Colonic mucosa (tissue), 4 donors: ENCODE measurements at regions of chrX and their contacts with region 1.

Region 1: DNA sequence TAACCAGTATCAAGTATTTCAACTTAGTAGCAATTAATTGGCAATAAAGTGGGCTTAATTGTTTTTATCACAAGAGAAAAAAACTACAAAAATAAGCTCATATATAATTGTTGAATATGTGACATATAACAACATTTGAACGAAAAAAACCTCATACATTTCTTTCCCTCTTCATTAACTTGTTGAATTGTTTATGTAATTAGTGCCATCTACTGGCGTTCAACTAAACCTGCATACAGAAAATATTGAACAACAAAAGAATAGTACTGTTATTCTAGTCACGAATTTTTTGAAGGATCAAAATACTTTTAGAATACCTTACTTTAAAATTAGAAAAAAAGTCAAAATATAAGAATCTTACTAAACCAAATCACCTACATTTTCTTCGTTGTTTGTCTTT is 586.5 kb upstream of the FTHL17 start:
- DNase-seq: no peak
- H3K4me3 ChIP-seq: no peak overlapping the region
- H3K27ac ChIP-seq: no peak overlapping the region
- H3K4me1 ChIP-seq: no peaks in the 10 kb centered on the region
- H3K27me3 ChIP-seq: no peaks in the 10 kb centered on the region
- CTCF ChIP-seq: peak; percentile 60

Region 2: DNA sequence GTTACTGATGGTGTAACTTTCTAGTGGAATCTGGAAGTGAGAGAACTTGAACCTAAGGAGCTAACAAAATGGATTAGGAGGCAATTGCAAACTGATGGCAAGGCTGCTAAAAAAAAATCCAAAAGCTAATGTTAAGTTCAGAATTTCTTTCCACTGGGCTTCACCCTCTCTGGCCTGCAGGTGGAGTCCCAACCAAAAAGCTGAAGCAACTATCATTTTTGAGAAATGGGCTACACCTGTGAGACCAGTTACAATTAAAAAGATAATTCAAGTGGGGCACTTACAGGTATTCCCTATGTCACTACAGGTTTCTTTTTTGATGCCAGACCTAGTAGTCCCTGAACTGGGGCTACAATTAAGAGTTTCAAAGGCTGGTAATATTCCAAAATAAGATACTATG is 444.4 kb before region 1 on chrX:
- intact Hi-C with region 1: loop called (anchors 5 kb)
- DNase-seq: no peak
- H3K4me3 ChIP-seq: no peak overlapping the region
- H3K27ac ChIP-seq: no peak overlapping the region
- H3K4me1 ChIP-seq: no peaks in the 10 kb centered on the region
- H3K27me3 ChIP-seq: peaks cover 4% of the 10 kb centered on the region
- CTCF ChIP-seq: peak; percentile 38

Region 3: GRCh38 chrX:31245714-31246113 is 412.6 kb before region 1 on chrX:
- intact Hi-C with region 1: no loop called
- DNase-seq: no peak
- H3K4me3 ChIP-seq: no peak overlapping the region
- H3K27ac ChIP-seq: no peak overlapping the region
- H3K4me1 ChIP-seq: no peaks in the 10 kb centered on the region
- H3K27me3 ChIP-seq: no peaks in the 10 kb centered on the region
- CTCF ChIP-seq: no peak

Region 4: GRCh38 chrX:31279359-31279758 is 379.0 kb before region 1 on chrX:
- intact Hi-C with region 1: loop called (anchors 10 kb)
- DNase-seq: no peak
- H3K4me3 ChIP-seq: no peak overlapping the region
- H3K27ac ChIP-seq: no peak overlapping the region
- H3K4me1 ChIP-seq: no peaks in the 10 kb centered on the region
- H3K27me3 ChIP-seq: no peaks in the 10 kb centered on the region
- CTCF ChIP-seq: no peak

Region 5: DNA sequence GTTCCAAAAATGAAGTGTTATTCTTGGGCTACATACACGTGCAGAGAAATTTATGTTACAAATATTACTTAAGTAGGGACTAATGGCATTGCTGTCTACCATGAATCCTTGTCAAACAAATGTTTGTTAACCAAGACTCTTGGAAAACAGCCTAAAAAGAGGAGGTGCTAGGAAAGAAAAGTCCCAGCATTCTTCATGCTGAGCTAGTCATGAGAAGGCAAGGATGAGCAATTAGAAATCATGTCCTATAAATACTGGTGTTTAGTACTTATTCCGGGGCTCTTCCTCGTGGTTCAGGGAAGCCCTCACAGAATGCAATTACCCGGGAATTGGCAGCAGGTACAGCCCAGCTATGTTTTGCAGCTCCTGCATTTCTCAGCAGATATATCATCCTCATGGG is 208.4 kb before region 1 on chrX:
- intact Hi-C with region 1: no loop called
- DNase-seq: no peak
- H3K4me3 ChIP-seq: no peak overlapping the region
- H3K27ac ChIP-seq: no peak overlapping the region
- H3K4me1 ChIP-seq: no peaks in the 10 kb centered on the region
- H3K27me3 ChIP-seq: no peaks in the 10 kb centered on the region
- CTCF ChIP-seq: no peak